Esophagus muscularis mucosa (tissue), 4 donors: ENCODE measurements at regions of chr1 and their contacts with region 1.

Region 1: GRCh38 chr1:46113948-46114347 is 18.5 kb downstream of the PIK3R3 start:
- DNase-seq: no peak
- H3K4me3 ChIP-seq: no peak overlapping the region
- H3K27ac ChIP-seq: no peak overlapping the region
- H3K4me1 ChIP-seq: peaks cover 0 to 22% (median 3%) of the 10 kb centered on the region in 4 donors
- H3K27me3 ChIP-seq: no peaks in the 10 kb centered on the region
- CTCF ChIP-seq: no peak
- EP300 ChIP-seq: no peak
- POLR2A ChIP-seq: no peak

Region 2: DNA sequence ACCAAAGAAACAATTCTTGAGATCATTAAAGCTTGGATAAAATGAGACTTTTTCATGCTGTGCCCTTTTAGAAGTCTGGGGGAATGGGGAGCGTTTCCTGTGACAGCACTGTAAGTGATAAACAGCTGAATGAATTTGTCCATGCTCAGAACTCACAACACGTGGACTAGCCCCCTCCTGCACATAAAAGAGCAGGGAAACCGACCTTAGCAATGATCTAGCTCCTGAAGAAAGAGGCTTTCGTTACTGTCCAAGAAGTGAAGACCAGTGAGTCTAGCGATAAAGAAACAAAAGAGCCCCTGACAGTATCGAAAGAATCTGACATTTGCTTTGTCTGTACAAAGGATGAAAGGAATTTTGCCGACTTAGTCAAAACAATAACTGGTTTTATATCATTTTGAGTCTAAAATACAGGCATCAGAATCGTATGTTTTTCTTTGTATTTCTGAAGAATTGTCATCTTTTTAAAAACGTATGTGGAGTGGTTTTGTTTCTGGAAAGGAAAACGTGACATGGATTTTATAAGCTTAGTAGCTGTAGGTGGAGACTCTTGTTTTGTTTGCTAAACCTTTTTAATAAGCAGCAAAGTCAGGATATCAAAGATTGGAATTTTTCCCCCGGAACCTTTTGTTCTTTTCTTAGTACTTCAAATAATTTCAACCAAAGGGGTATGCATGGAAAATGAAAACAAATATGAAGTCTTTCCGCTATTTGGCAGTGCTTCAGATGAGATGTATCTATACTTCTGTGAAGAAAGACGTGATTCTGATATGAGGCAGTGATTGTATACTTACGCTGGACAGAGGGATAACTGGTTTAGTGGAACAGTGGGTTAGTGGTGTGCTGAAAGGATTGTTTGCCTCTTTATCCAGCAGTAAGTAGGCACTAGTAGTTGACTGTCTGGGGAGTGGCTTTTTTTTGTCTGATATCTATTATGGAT is 249.5 kb before region 1 on chr1:
- intact Hi-C with region 1: no loop called
- DNase-seq: no peak
- H3K4me3 ChIP-seq: peak overlapping the region; percentile 40 to 50 (median 48)
- H3K27ac ChIP-seq: peak overlapping the region in 2 of 4 donors; percentile 23 to 41
- H3K4me1 ChIP-seq: peaks cover 12 to 29% (median 24%) of the 10 kb centered on the region in 4 donors
- H3K27me3 ChIP-seq: no peaks in the 10 kb centered on the region
- CTCF ChIP-seq: no peak
- EP300 ChIP-seq: no peak
- POLR2A ChIP-seq: no peak

Region 3: DNA sequence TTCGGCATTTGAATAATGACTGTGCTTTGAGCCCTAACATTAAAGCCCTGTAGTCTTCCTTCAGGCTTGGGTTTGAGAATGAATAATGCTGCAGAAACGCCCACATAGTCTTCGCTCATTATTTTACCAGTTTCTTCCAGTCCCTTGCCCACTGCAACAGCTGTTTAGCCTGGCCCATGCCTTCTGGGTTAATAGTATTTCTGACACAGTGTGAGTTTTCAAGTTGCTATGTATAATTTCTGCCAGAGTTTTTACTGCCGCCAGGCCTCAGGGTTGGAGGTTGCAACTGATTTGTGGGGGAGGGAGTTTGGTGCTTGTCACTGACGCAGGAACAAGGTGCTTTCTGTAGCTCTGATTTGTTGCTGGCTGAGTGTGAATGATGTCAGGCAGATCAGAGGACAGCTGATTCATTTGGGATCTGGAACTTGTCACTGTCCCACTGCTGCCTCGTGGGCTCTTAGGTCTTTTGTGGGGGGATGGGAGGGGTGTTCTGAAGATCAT is 200.7 kb before region 1 on chr1:
- intact Hi-C with region 1: no loop called
- DNase-seq: no peak
- H3K4me3 ChIP-seq: peak overlapping the region in 3 of 4 donors; percentile 10 to 27 (median 26)
- H3K27ac ChIP-seq: peak overlapping the region; percentile 70 to 87 (median 82)
- H3K4me1 ChIP-seq: peaks cover 11 to 69% (median 50%) of the 10 kb centered on the region in 4 donors
- H3K27me3 ChIP-seq: no peaks in the 10 kb centered on the region
- CTCF ChIP-seq: no peak
- EP300 ChIP-seq: peak; percentile 24
- POLR2A ChIP-seq: no peak

Region 4: GRCh38 chr1:46043458-46044017 is 70.4 kb before region 1 on chr1:
- intact Hi-C with region 1: loop called (anchors 10 kb)
- DNase-seq: peak; percentile 64
- H3K4me3 ChIP-seq: no peak overlapping the region
- H3K27ac ChIP-seq: no peak overlapping the region
- H3K4me1 ChIP-seq: peaks cover 20 to 43% (median 29%) of the 10 kb centered on the region in 4 donors
- H3K27me3 ChIP-seq: no peaks in the 10 kb centered on the region
- CTCF ChIP-seq: no peak
- EP300 ChIP-seq: no peak
- POLR2A ChIP-seq: no peak